ENCODE measurements at regions of chr6 and their contacts with region 1.

Region 1: GRCh38 chr6:157235600-157236039 is 87.7 kb downstream of the TMEM242 start:
- DNase-seq: peak; percentile 16 to 83 (median 48)
- ATAC-seq: peak; percentile 90
- H3K4me3 ChIP-seq: peak overlapping the region; percentile 65
- H3K4me3 Mint-ChIP-seq: peak overlapping the region; percentile 96
- H3K27ac ChIP-seq: no peak overlapping the region
- H3K27ac Mint-ChIP-seq: peak overlapping the region; percentile 25
- H3K4me1 ChIP-seq: peaks cover 33% of the 10 kb centered on the region
- H3K4me1 Mint-ChIP-seq: peaks cover 26% of the 10 kb centered on the region
- H3K27me3 ChIP-seq: peaks cover 6 to 25% of the 10 kb centered on the region in 2 experiments
- H3K27me3 Mint-ChIP-seq: peaks cover 37% of the 10 kb centered on the region
- CTCF ChIP-seq: peak; percentile 76

Region 2: DNA sequence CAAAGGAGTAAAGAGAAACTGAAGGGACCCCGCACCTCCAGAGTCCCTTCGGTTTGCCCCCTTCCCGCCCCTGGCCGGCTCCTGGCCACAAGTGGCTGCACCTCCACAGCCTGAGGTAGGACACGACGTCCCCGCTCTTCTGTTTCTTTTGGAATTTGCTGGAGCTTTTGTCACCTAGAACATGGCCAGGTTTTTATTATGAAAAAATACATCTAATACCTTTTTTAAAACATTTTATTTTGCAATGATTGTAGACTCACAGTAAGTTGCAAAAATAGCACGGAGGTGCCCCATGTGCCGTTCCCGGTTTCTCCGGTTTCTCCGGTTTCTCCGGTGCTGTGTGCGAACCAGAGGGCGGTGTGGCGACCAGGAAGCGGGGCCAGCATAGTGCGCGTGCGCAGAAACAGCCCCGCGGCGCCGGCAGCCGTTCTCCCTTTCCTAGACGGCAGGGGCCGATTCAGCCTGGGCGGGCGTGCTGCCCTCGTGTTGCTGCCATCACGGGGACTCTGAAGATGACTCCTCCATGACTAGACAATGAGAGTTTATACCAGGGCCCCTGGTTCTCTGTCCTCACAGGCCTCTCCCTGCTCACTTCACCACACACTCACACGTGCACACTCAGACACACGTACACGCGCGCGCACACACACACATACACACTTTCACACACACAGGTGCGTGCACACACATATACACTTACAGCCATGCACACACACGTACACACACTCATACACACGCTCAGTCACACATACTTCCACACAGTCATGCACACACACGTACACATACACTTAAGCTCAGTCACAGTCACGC is 14.4 kb before region 1 on chr6:
- CTCF ChIA-PET with region 1: interaction called, 13 read pairs
- POLR2A ChIA-PET with region 1: interaction called, 9 read pairs
- intact Hi-C with region 1: no loop called
- DNase-seq: peak; percentile 67 to 90 (median 80)
- ATAC-seq: peak; percentile 94
- H3K4me3 ChIP-seq: peak overlapping the region; percentile 60
- H3K4me3 Mint-ChIP-seq: peak overlapping the region; percentile 88
- H3K27ac ChIP-seq: no peak overlapping the region
- H3K27ac Mint-ChIP-seq: peak overlapping the region; percentile 28
- H3K4me1 ChIP-seq: peaks cover 44% of the 10 kb centered on the region
- H3K4me1 Mint-ChIP-seq: peaks cover 38% of the 10 kb centered on the region
- H3K27me3 ChIP-seq: no peaks in the 10 kb centered on the region
- H3K27me3 Mint-ChIP-seq: no peaks in the 10 kb centered on the region
- CTCF ChIP-seq: no peak

Region 3: GRCh38 chr6:157688960-157689599 is 453.5 kb after region 1 on chr6:
- CTCF ChIA-PET with region 1: no interaction called
- POLR2A ChIA-PET with region 1: no interaction called
- intact Hi-C with region 1: no loop called
- DNase-seq: no peak
- ATAC-seq: no peak
- H3K4me3 ChIP-seq: no peak overlapping the region
- H3K4me3 Mint-ChIP-seq: no peak overlapping the region
- H3K27ac ChIP-seq: no peak overlapping the region
- H3K27ac Mint-ChIP-seq: no peak overlapping the region
- H3K4me1 ChIP-seq: no peaks in the 10 kb centered on the region
- H3K4me1 Mint-ChIP-seq: no peaks in the 10 kb centered on the region
- H3K27me3 ChIP-seq: no peaks in the 10 kb centered on the region
- H3K27me3 Mint-ChIP-seq: no peaks in the 10 kb centered on the region
- CTCF ChIP-seq: no peak

Measured in CD4-positive, alpha-beta T cell (primary cell).